ENCODE measurements at regions of chr12 and their contacts with region 1.

Region 1: GRCh38 chr12:11648831-11649702 is at the start of gene ETV6:
- DNase-seq: peak; percentile 79
- H3K4me3 Mint-ChIP-seq: peak within 1 kb of the TSS; percentile 84
- H3K27ac Mint-ChIP-seq: peak within 1 kb of the TSS; percentile 97
- H3K4me1 Mint-ChIP-seq: peaks cover 14% of the 10 kb centered on the region
- H3K27me3 Mint-ChIP-seq: no peaks in the 10 kb centered on the region
- CTCF ChIP-seq: no peak
- total RNA-seq, gene ETV6: 80.6 and 89.1 TPM in 2 replicates

Region 2: GRCh38 chr12:11630046-11630706 is 18.9 kb before region 1 on chr12:
- CTCF ChIA-PET with region 1: no interaction called
- intact Hi-C with region 1: loop called (anchors 2 kb)
- DNase-seq: peak; percentile 32
- H3K4me3 Mint-ChIP-seq: no peak overlapping the region
- H3K27ac Mint-ChIP-seq: no peak overlapping the region
- H3K4me1 Mint-ChIP-seq: peaks cover 44% of the 10 kb centered on the region
- H3K27me3 Mint-ChIP-seq: no peaks in the 10 kb centered on the region
- CTCF ChIP-seq: no peak

Region 3: GRCh38 chr12:11705010-11705409 is 55.9 kb after region 1 on chr12:
- CTCF ChIA-PET with region 1: no interaction called
- intact Hi-C with region 1: loop called (anchors 5 kb)
- DNase-seq: peak; percentile 52
- H3K4me3 Mint-ChIP-seq: no peak overlapping the region
- H3K27ac Mint-ChIP-seq: peak overlapping the region; percentile 74
- H3K4me1 Mint-ChIP-seq: peaks cover 94% of the 10 kb centered on the region
- H3K27me3 Mint-ChIP-seq: no peaks in the 10 kb centered on the region
- CTCF ChIP-seq: no peak

Region 4: DNA sequence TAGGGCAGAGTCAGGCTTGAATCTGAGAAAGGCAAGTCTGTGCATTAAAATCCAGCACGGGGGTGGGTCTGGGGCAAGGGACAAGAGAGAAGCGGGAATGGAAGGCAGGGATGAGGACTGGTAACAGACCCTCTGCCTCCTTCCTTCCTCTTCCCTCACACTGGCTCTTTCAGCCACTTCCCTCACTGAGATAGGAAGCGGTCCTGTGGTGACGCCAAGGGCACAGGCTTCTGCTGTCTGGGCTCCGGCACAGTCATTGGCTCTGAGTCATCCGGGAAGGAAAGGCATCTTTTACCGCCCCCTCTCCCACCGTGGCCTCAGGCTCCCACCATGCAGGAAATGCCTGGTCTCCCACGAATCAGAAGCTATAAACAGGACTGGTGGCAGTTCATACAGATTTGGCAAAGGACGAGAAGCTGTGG is 70.6 kb after region 1 on chr12:
- CTCF ChIA-PET with region 1: no interaction called
- intact Hi-C with region 1: no loop called
- DNase-seq: peak; percentile 40
- H3K4me3 Mint-ChIP-seq: peak overlapping the region; percentile 18
- H3K27ac Mint-ChIP-seq: peak overlapping the region; percentile 72
- H3K4me1 Mint-ChIP-seq: peaks cover 54% of the 10 kb centered on the region
- H3K27me3 Mint-ChIP-seq: no peaks in the 10 kb centered on the region
- CTCF ChIP-seq: no peak

Region 5: DNA sequence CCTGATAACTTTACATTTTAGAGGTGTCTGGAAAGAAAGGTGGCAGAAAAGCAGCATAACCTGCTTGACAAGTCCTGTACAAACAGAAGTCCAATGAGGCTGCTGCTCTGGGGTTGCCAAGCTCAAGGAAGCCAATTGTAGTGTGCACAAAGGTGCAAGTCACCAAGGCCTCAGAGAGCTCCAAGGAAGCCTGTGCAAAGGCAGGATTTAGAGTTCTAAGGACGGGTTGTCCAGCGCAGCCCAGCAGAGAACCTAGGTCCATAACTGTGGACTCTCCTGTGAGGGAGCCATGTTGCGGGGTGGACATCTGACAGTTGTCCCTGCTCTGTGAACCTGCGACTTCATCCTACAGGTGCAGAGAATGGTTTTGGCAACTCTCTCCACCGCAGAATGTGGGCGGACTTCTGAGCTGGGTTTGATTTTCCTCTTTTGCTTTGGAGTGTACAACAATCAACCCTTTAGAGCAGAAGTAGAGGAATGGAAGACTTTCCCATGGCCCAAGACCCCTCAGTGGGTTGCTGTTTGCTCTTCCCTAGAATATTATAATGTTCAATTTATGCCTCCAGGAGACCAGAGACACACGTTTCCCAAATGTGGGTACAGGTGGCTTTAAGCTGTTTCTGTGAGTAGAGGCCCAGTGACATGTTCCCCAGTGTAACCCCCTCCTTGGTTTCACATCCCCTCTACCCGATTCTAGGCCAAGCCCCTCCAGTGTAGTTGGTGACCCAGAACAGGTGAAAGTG is 81.4 kb after region 1 on chr12:
- CTCF ChIA-PET with region 1: no interaction called
- intact Hi-C with region 1: loop called (anchors 2 kb)
- DNase-seq: peak; percentile 81
- H3K4me3 Mint-ChIP-seq: peak overlapping the region; percentile 58
- H3K27ac Mint-ChIP-seq: peak overlapping the region; percentile 98
- H3K4me1 Mint-ChIP-seq: peaks cover 60% of the 10 kb centered on the region
- H3K27me3 Mint-ChIP-seq: no peaks in the 10 kb centered on the region
- CTCF ChIP-seq: no peak

Region 6: GRCh38 chr12:11746024-11746771 is 97.1 kb after region 1 on chr12:
- CTCF ChIA-PET with region 1: no interaction called
- intact Hi-C with region 1: loop called (anchors 5 kb)
- DNase-seq: peak; percentile 76
- H3K4me3 Mint-ChIP-seq: no peak overlapping the region
- H3K27ac Mint-ChIP-seq: peak overlapping the region; percentile 91
- H3K4me1 Mint-ChIP-seq: peaks cover 77% of the 10 kb centered on the region
- H3K27me3 Mint-ChIP-seq: no peaks in the 10 kb centered on the region
- CTCF ChIP-seq: no peak

Region 7: GRCh38 chr12:11798856-11799501 is 149.9 kb after region 1 on chr12:
- CTCF ChIA-PET with region 1: no interaction called
- intact Hi-C with region 1: loop called (anchors 2 kb)
- DNase-seq: no peak
- H3K4me3 Mint-ChIP-seq: no peak overlapping the region
- H3K27ac Mint-ChIP-seq: peak overlapping the region; percentile 96
- H3K4me1 Mint-ChIP-seq: peaks cover 56% of the 10 kb centered on the region
- H3K27me3 Mint-ChIP-seq: no peaks in the 10 kb centered on the region
- CTCF ChIP-seq: no peak

Region 8: GRCh38 chr12:11877869-11878780 is 229.1 kb after region 1 on chr12:
- CTCF ChIA-PET with region 1: no interaction called
- intact Hi-C with region 1: loop called (anchors 5 kb)
- DNase-seq: peak; percentile 50
- H3K4me3 Mint-ChIP-seq: peak overlapping the region; percentile 49
- H3K27ac Mint-ChIP-seq: peak overlapping the region; percentile 97
- H3K4me1 Mint-ChIP-seq: peaks cover 78% of the 10 kb centered on the region
- H3K27me3 Mint-ChIP-seq: no peaks in the 10 kb centered on the region
- CTCF ChIP-seq: no peak